IMR-90 (cell line): ENCODE measurements at regions of chr9 and their contacts with region 1.

Region 1: GRCh38 chr9:96217754-96218693 is 84.0 kb downstream of the HSD17B3 start:
- DNase-seq: peak; percentile 30
- ATAC-seq: peak; percentile 99
- H3K4me3 ChIP-seq: peak overlapping the region; percentile 28
- H3K27ac ChIP-seq: no peak overlapping the region
- H3K4me1 ChIP-seq: peaks cover 2% of the 10 kb centered on the region; the same call in 1 of the 2 replicates
- H3K27me3 ChIP-seq: peaks cover 34% of the 10 kb centered on the region
- CTCF ChIP-seq: peak; percentile 99
- POLR2A ChIP-seq: peak; percentile 54; the same call in 1 of the 2 replicates
- RAD21 ChIP-seq: peak; percentile 98

Region 2: GRCh38 chr9:94672811-94673487 is 1545.1 kb before region 1 on chr9:
- CTCF ChIA-PET with region 1: no interaction called
- POLR2A ChIA-PET with region 1: no interaction called
- dilution Hi-C with region 1: no loop called
- in situ Hi-C with region 1: loop called (anchors 10 kb)
- intact Hi-C with region 1: no loop called
- DNase-seq: peak; percentile 67
- ATAC-seq: peak; percentile 68
- H3K4me3 ChIP-seq: no peak overlapping the region
- H3K27ac ChIP-seq: peak overlapping the region; percentile 19; the same call in 1 of the 2 replicates
- H3K4me1 ChIP-seq: peaks cover 9% of the 10 kb centered on the region; the same call in 1 of the 2 replicates
- H3K27me3 ChIP-seq: no peaks in the 10 kb centered on the region
- CTCF ChIP-seq: no peak
- POLR2A ChIP-seq: no peak
- RAD21 ChIP-seq: no peak

Region 3: DNA sequence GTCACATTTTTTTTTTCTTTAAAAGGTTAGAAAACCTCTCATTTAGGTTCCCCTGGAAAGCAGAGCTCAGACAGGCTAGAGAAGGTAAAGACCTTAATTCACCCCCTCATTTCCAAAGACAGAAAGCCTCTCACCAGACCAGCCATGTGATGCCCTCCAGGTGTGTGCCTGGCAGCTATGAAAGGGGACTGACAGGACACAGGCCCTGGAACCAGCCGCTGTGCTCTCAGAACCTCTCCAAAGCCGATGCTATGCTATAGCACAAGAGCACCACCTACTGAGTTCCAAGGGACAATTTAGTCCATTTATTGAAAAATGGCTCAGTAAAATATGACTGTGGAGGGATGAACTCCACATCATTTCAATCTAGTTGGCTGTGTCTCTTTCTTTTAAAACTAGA is 949.3 kb before region 1 on chr9:
- CTCF ChIA-PET with region 1: no interaction called
- POLR2A ChIA-PET with region 1: no interaction called
- dilution Hi-C with region 1: no loop called
- in situ Hi-C with region 1: no loop called
- intact Hi-C with region 1: loop called (anchors 5 kb)
- DNase-seq: peak; percentile 41
- ATAC-seq: peak; percentile 69
- H3K4me3 ChIP-seq: no peak overlapping the region
- H3K27ac ChIP-seq: no peak overlapping the region
- H3K4me1 ChIP-seq: peaks cover 4% of the 10 kb centered on the region; the same call in 1 of the 2 replicates
- H3K27me3 ChIP-seq: no peaks in the 10 kb centered on the region
- CTCF ChIP-seq: peak; percentile 49
- POLR2A ChIP-seq: no peak
- RAD21 ChIP-seq: peak; percentile 50

Region 4: GRCh38 chr9:95336281-95336680 is 881.7 kb before region 1 on chr9:
- CTCF ChIA-PET with region 1: no interaction called
- POLR2A ChIA-PET with region 1: no interaction called
- dilution Hi-C with region 1: no loop called
- in situ Hi-C with region 1: loop called (anchors 25 kb)
- intact Hi-C with region 1: no loop called
- DNase-seq: no peak
- ATAC-seq: no peak
- H3K4me3 ChIP-seq: no peak overlapping the region
- H3K27ac ChIP-seq: no peak overlapping the region
- H3K4me1 ChIP-seq: no peaks in the 10 kb centered on the region
- H3K27me3 ChIP-seq: no peaks in the 10 kb centered on the region
- CTCF ChIP-seq: peak; percentile 35
- POLR2A ChIP-seq: no peak
- RAD21 ChIP-seq: no peak

Region 5: GRCh38 chr9:95726756-95727155 is 491.3 kb before region 1 on chr9:
- CTCF ChIA-PET with region 1: interaction called, 3 read pairs
- POLR2A ChIA-PET with region 1: no interaction called
- dilution Hi-C with region 1: no loop called
- in situ Hi-C with region 1: loop called (anchors 25 kb)
- intact Hi-C with region 1: loop called (anchors 1 kb)
- DNase-seq: peak; percentile 59
- ATAC-seq: peak; percentile 89
- H3K4me3 ChIP-seq: no peak overlapping the region
- H3K27ac ChIP-seq: no peak overlapping the region
- H3K4me1 ChIP-seq: peaks cover 2% of the 10 kb centered on the region; the same call in 1 of the 2 replicates
- H3K27me3 ChIP-seq: peaks cover 15% of the 10 kb centered on the region
- CTCF ChIP-seq: peak; percentile 69
- POLR2A ChIP-seq: no peak
- RAD21 ChIP-seq: peak; percentile 74

Region 6: GRCh38 chr9:95875305-95876137 is 342.5 kb before region 1 on chr9 and contains the start of gene ERCC6L2:
- CTCF ChIA-PET with region 1: interaction called, 3 read pairs
- POLR2A ChIA-PET with region 1: no interaction called
- dilution Hi-C with region 1: no loop called
- in situ Hi-C with region 1: no loop called
- intact Hi-C with region 1: loop called (anchors 5 kb)
- DNase-seq: peak; percentile 99
- ATAC-seq: peak; percentile 88
- H3K4me3 ChIP-seq: no peak within 1 kb of the TSS
- H3K27ac ChIP-seq: peak within 1 kb of the TSS; percentile 87
- H3K4me1 ChIP-seq: peaks cover 2% of the 10 kb centered on the region
- H3K27me3 ChIP-seq: no peaks in the 10 kb centered on the region
- CTCF ChIP-seq: no peak
- POLR2A ChIP-seq: peak; percentile 96
- RAD21 ChIP-seq: peak; percentile 2; the same call in 1 of the 2 replicates
- total RNA-seq, gene ERCC6L2: 67.6 and 83.3 TPM in 2 replicates

Region 7: GRCh38 chr9:96256800-96257199 is 38.8 kb after region 1 on chr9:
- CTCF ChIA-PET with region 1: no interaction called
- POLR2A ChIA-PET with region 1: no interaction called
- dilution Hi-C with region 1: no loop called
- in situ Hi-C with region 1: no loop called
- intact Hi-C with region 1: no loop called
- DNase-seq: peak; percentile 11
- ATAC-seq: no peak
- H3K4me3 ChIP-seq: no peak overlapping the region
- H3K27ac ChIP-seq: no peak overlapping the region
- H3K4me1 ChIP-seq: no peaks in the 10 kb centered on the region
- H3K27me3 ChIP-seq: peaks cover 2% of the 10 kb centered on the region; the same call in 1 of the 2 replicates
- CTCF ChIP-seq: no peak
- POLR2A ChIP-seq: no peak
- RAD21 ChIP-seq: no peak